Mammary epithelial cell (primary cell): ENCODE measurements at regions of chr15 and their contacts with region 1.

Region 1: GRCh38 chr15:100572362-100572983 is 29.5 kb downstream of the LINS1 start:
- DNase-seq: no peak
- H3K4me3 ChIP-seq: no peak overlapping the region
- H3K27ac ChIP-seq: no peak overlapping the region
- H3K4me1 ChIP-seq: no peaks in the 10 kb centered on the region
- H3K27me3 ChIP-seq: no peaks in the 10 kb centered on the region
- CTCF ChIP-seq: peak; percentile 29 to 34

Region 2: GRCh38 chr15:100433300-100433699 is 139.2 kb before region 1 on chr15:
- CTCF ChIA-PET with region 1: no interaction called
- dilution Hi-C with region 1: no loop called
- in situ Hi-C with region 1: no loop called
- intact Hi-C with region 1: loop called (anchors 1 kb)
- DNase-seq: peak; percentile 8
- H3K4me3 ChIP-seq: no peak overlapping the region
- H3K27ac ChIP-seq: no peak overlapping the region
- H3K4me1 ChIP-seq: no peaks in the 10 kb centered on the region
- H3K27me3 ChIP-seq: no peaks in the 10 kb centered on the region
- CTCF ChIP-seq: peak in 1 of 2 donors; percentile 30

Region 3: DNA sequence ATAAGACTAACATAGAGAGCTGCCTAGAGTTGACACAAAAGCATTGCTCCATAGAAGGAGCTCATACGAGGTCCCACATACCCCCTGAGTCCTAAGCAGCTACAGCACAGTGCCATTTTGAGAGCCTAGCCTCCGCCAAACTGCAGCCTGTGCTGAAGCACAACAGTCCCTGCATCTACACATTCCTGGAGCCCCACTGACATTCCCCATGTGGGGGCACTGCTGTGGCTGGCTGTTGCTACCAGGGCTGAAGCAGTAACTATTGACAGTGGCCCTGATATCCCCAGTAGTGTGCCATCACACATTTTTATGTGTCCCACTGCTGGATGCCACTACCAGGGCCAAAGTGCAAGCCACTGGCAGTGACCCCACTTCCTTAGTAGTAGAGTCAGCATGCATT is 124.0 kb before region 1 on chr15:
- CTCF ChIA-PET with region 1: interaction called, 41 read pairs
- dilution Hi-C with region 1: no loop called
- in situ Hi-C with region 1: no loop called
- intact Hi-C with region 1: no loop called
- DNase-seq: no peak
- H3K4me3 ChIP-seq: no peak overlapping the region
- H3K27ac ChIP-seq: no peak overlapping the region
- H3K4me1 ChIP-seq: no peaks in the 10 kb centered on the region
- H3K27me3 ChIP-seq: no peaks in the 10 kb centered on the region
- CTCF ChIP-seq: no peak

Region 4: GRCh38 chr15:100526027-100526481 is 46.4 kb before region 1 on chr15:
- CTCF ChIA-PET with region 1: no interaction called
- dilution Hi-C with region 1: loop called (anchors 10 kb)
- in situ Hi-C with region 1: no loop called
- intact Hi-C with region 1: no loop called
- DNase-seq: no peak
- H3K4me3 ChIP-seq: no peak overlapping the region
- H3K27ac ChIP-seq: no peak overlapping the region
- H3K4me1 ChIP-seq: peaks cover 12% of the 10 kb centered on the region
- H3K27me3 ChIP-seq: no peaks in the 10 kb centered on the region
- CTCF ChIP-seq: peak in 1 of 2 donors; percentile 17

Region 5: DNA sequence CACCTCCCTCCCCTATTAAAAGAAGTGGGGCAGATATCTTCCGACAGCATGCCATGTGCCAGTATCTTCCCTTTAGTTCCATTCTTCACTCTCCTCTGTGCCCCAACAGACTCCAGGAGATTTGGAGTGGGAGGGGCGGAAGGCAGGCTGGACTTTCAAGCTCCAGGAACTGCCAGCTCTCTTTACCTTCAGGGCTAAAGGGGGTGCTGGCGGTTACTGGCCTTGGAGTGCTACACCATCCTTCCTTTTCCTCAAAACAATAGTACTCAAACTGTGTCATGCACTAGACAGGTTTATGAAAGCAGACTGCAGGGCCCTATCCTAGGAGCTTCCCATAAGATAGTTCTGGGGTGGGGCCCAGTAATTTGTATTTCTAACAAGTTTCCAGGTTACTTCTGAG is 23.5 kb after region 1 on chr15:
- CTCF ChIA-PET with region 1: no interaction called
- dilution Hi-C with region 1: no loop called
- in situ Hi-C with region 1: no loop called
- intact Hi-C with region 1: no loop called
- DNase-seq: peak; percentile 23
- H3K4me3 ChIP-seq: peak overlapping the region; percentile 8 to 39 (median 35)
- H3K27ac ChIP-seq: peak overlapping the region; percentile 74
- H3K4me1 ChIP-seq: peaks cover 20% of the 10 kb centered on the region
- H3K27me3 ChIP-seq: no peaks in the 10 kb centered on the region
- CTCF ChIP-seq: no peak

Region 6: GRCh38 chr15:100623301-100623700 is 50.8 kb after region 1 on chr15:
- CTCF ChIA-PET with region 1: no interaction called
- dilution Hi-C with region 1: no loop called
- in situ Hi-C with region 1: no loop called
- intact Hi-C with region 1: no loop called
- DNase-seq: peak; percentile 12
- H3K4me3 ChIP-seq: no peak overlapping the region
- H3K27ac ChIP-seq: no peak overlapping the region
- H3K4me1 ChIP-seq: no peaks in the 10 kb centered on the region
- H3K27me3 ChIP-seq: no peaks in the 10 kb centered on the region
- CTCF ChIP-seq: no peak

Region 7: DNA sequence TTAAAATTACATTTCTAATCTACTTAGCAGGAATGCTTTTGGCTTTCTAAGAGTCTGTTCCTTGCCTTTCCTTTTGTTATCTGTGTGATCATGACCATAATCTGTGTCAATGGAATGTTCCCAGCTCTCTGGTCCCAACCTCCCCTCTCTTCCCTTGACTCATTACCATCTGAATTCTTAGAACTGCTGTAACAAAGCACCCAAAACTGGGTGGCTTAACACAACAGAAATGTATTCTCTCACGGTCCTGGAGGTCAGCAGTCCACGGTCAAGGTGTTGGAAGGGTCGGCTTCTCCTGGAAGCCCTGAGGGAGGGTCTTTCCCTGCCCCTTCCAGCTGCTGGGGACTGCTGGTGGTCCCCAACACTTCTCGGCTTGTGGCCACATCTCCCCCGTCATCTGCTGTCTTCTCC is 427.8 kb after region 1 on chr15:
- CTCF ChIA-PET with region 1: no interaction called
- dilution Hi-C with region 1: no loop called
- in situ Hi-C with region 1: no loop called
- intact Hi-C with region 1: no loop called
- DNase-seq: no peak
- H3K4me3 ChIP-seq: no peak overlapping the region
- H3K27ac ChIP-seq: no peak overlapping the region
- H3K4me1 ChIP-seq: no peaks in the 10 kb centered on the region
- H3K27me3 ChIP-seq: no peaks in the 10 kb centered on the region
- CTCF ChIP-seq: no peak